ENCODE measurements at regions of chrX and their contacts with region 1.

Region 1: GRCh38 chrX:134537179-134537955 is 77.4 kb downstream of the HPRT1 start:
- DNase-seq: no peak
- H3K4me3 ChIP-seq: no peak overlapping the region
- H3K27ac ChIP-seq: peak overlapping the region; percentile 73
- H3K4me1 ChIP-seq: peaks cover 13% of the 10 kb centered on the region
- H3K27me3 ChIP-seq: no peaks in the 10 kb centered on the region
- CTCF ChIP-seq: no peak

Region 2: GRCh38 chrX:134599184-134599914 is 62.0 kb after region 1 on chrX:
- intact Hi-C with region 1: loop called (anchors 10 kb)
- DNase-seq: no peak
- H3K4me3 ChIP-seq: no peak overlapping the region
- H3K27ac ChIP-seq: no peak overlapping the region
- H3K4me1 ChIP-seq: peaks cover 8% of the 10 kb centered on the region
- H3K27me3 ChIP-seq: no peaks in the 10 kb centered on the region
- CTCF ChIP-seq: no peak